ENCODE measurements at regions of chr3 and their contacts with region 1.

Region 1: GRCh38 chr3:192423003-192423349 is 304.4 kb downstream of the FGF12 start:
- DNase-seq: no peak
- ATAC-seq: no peak
- H3K4me3 ChIP-seq: no peak overlapping the region
- H3K4me3 Mint-ChIP-seq: no peak overlapping the region
- H3K27ac ChIP-seq: no peak overlapping the region
- H3K27ac Mint-ChIP-seq: no peak overlapping the region
- H3K4me1 ChIP-seq: no peaks in the 10 kb centered on the region
- H3K4me1 Mint-ChIP-seq: no peaks in the 10 kb centered on the region
- H3K27me3 ChIP-seq: no peaks in the 10 kb centered on the region
- H3K27me3 Mint-ChIP-seq: peaks cover 0 to 21% (median 2%) of the 10 kb centered on the region in 5 donors

Region 2: DNA sequence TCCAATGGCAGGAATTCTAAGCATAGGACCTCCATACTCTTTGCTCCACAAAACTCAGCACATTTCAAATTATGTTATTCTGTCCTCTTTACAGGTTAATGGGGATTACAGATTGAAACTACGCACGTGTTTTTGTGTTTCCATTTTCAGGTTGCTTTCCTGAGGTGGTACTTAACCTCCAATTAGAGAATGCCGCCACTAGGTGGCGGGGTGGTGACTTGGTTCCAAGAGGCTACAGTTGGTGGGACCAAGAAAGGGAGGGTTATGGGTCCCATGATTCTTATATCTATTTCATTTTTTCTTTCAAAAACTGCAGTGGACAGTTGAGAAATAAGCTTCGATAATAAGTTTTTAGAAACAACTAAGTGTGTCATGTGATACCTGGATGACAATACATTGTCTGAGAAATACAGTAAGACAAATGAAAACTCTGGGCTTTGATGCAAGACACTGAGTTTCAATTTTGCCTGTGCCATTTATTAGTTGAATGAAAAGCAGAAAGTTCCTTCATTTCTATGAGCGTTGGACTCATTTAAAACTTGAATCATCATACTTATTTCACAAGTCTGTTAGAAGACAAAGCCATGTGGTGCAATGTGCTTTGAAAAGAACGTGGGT is 234.6 kb before region 1 on chr3:
- CTCF ChIA-PET with region 1: no interaction called
- POLR2A ChIA-PET with region 1: no interaction called
- intact Hi-C with region 1: loop called in 1 of 2 experiments (anchors 1 kb)
- DNase-seq: peak in 3 of 9 donors; percentile 0 to 32 (median 2)
- ATAC-seq: no peak
- H3K4me3 ChIP-seq: no peak overlapping the region
- H3K4me3 Mint-ChIP-seq: no peak overlapping the region
- H3K27ac ChIP-seq: no peak overlapping the region
- H3K27ac Mint-ChIP-seq: no peak overlapping the region
- H3K4me1 ChIP-seq: no peaks in the 10 kb centered on the region
- H3K4me1 Mint-ChIP-seq: peaks cover 0 to 6% (median 0%) of the 10 kb centered on the region in 7 donors
- H3K27me3 ChIP-seq: no peaks in the 10 kb centered on the region
- H3K27me3 Mint-ChIP-seq: no peaks in the 10 kb centered on the region

Region 3: DNA sequence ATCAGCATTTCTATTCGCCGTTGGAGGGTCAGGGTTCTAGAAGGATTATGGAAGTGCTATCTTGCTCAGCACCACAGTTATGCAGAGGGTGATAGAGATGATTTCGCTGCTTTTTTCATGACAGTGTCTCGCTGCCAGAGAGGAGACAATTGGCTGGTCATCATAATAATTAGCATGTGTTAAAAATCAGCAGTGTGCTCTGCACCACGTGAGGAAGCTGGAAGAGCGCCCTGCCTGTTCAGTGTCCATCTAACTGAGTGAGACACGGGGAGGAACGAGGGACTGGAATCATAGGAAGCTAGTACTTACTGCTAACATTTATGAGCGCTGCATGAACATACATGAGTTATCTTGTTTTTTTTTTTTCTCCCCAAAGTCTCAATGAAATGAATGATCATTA is 701.9 kb after region 1 on chr3:
- CTCF ChIA-PET with region 1: no interaction called
- POLR2A ChIA-PET with region 1: no interaction called
- intact Hi-C with region 1: no loop called
- DNase-seq: no peak
- ATAC-seq: no peak
- H3K4me3 ChIP-seq: no peak overlapping the region
- H3K4me3 Mint-ChIP-seq: no peak overlapping the region
- H3K27ac ChIP-seq: no peak overlapping the region
- H3K27ac Mint-ChIP-seq: no peak overlapping the region
- H3K4me1 ChIP-seq: no peaks in the 10 kb centered on the region
- H3K4me1 Mint-ChIP-seq: no peaks in the 10 kb centered on the region
- H3K27me3 ChIP-seq: no peaks in the 10 kb centered on the region
- H3K27me3 Mint-ChIP-seq: peaks cover 0 to 29% (median 7%) of the 10 kb centered on the region in 5 donors